Activated CD4-positive, alpha-beta memory T cell treated with anti-CD3 and anti-CD28 coated beads, Interleukin-2, amount 10 ng/mL, durations not matched to agents 7 days and 5 days (primary cell): ENCODE measurements at regions of chr2 and their contacts with region 1.

Region 1: GRCh38 chr2:69914170-69914960 is 544 bp upstream of the MXD1 start:
- DNase-seq: peak; percentile 100
- H3K4me3 Mint-ChIP-seq: peak overlapping the region; percentile 82
- H3K27ac Mint-ChIP-seq: peak overlapping the region; percentile 81
- H3K4me1 Mint-ChIP-seq: peaks cover 43% of the 10 kb centered on the region
- H3K27me3 Mint-ChIP-seq: no peaks in the 10 kb centered on the region

Region 2: GRCh38 chr2:69724540-69725159 is 189.7 kb before region 1 on chr2:
- CTCF ChIA-PET with region 1: interaction called, 37 read pairs
- POLR2A ChIA-PET with region 1: no interaction called
- DNase-seq: peak; percentile 87
- H3K4me3 Mint-ChIP-seq: peak overlapping the region; percentile 41
- H3K27ac Mint-ChIP-seq: no peak overlapping the region
- H3K4me1 Mint-ChIP-seq: peaks cover 6% of the 10 kb centered on the region
- H3K27me3 Mint-ChIP-seq: no peaks in the 10 kb centered on the region

Region 3: GRCh38 chr2:69933839-69934613 is 19.7 kb after region 1 on chr2:
- CTCF ChIA-PET with region 1: interaction called, 4 read pairs
- POLR2A ChIA-PET with region 1: interaction called, 21 read pairs
- DNase-seq: no peak
- H3K4me3 Mint-ChIP-seq: no peak overlapping the region
- H3K27ac Mint-ChIP-seq: peak overlapping the region; percentile 15
- H3K4me1 Mint-ChIP-seq: peaks cover 40% of the 10 kb centered on the region
- H3K27me3 Mint-ChIP-seq: no peaks in the 10 kb centered on the region

Region 4: DNA sequence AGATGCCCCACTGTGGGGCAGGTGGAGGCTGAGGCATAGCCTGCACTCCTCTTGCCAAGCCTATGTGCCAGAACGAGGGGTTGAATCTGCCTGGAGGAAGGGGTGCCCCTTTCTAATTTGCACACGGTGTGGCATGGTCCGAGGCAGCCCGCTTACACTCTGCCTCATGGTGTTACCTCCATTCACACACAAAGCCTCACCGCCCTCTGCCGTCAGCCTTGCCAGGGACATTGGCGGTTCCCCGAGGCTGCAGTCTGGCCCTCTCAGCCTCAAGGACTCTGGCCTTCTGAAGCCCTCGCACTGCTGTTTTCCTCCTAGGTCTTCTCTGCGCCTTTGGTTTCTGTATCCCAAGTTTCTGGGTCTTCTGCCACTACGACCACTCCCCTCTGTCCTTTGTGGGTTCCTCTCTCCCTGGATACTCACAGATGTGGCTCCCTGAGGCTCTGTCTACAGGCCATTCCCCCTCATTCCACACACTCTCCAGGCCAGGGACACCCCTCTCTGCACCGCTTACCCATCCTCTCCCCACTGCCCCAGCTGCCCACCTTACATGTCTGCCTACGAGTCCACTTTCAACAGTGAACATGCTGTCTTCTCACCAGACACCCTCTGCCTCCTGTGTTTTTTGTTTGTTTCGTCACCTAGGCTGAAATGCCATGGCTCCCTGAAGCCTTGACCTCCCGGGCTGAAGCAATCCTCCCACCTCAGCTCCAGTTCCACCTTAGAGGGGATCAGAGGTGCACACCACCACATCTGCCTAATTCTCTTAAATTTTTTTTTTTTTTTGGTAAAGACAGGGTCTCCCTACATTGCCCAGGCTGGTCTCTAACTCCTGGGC is 55.0 kb after region 1 on chr2:
- CTCF ChIA-PET with region 1: no interaction called
- POLR2A ChIA-PET with region 1: no interaction called
- DNase-seq: no peak
- H3K4me3 Mint-ChIP-seq: no peak overlapping the region
- H3K27ac Mint-ChIP-seq: no peak overlapping the region
- H3K4me1 Mint-ChIP-seq: peaks cover 10% of the 10 kb centered on the region
- H3K27me3 Mint-ChIP-seq: peaks cover 4% of the 10 kb centered on the region

Region 5: GRCh38 chr2:70062268-70062667 is 147.9 kb after region 1 on chr2:
- CTCF ChIA-PET with region 1: interaction called, 251 read pairs
- POLR2A ChIA-PET with region 1: interaction called, 228 read pairs
- DNase-seq: no peak
- H3K4me3 Mint-ChIP-seq: no peak overlapping the region
- H3K27ac Mint-ChIP-seq: no peak overlapping the region
- H3K4me1 Mint-ChIP-seq: peaks cover 18% of the 10 kb centered on the region
- H3K27me3 Mint-ChIP-seq: no peaks in the 10 kb centered on the region

Region 6: GRCh38 chr2:70086838-70087701 is 172.7 kb after region 1 on chr2 and contains the start of gene PCBP1:
- CTCF ChIA-PET with region 1: interaction called, 36 read pairs
- POLR2A ChIA-PET with region 1: interaction called, 287 read pairs
- DNase-seq: peak; percentile 95
- H3K4me3 Mint-ChIP-seq: peak within 1 kb of the TSS; percentile 98
- H3K27ac Mint-ChIP-seq: peak within 1 kb of the TSS; percentile 100
- H3K4me1 Mint-ChIP-seq: peaks cover 59% of the 10 kb centered on the region
- H3K27me3 Mint-ChIP-seq: no peaks in the 10 kb centered on the region
- total RNA-seq, gene PCBP1: 475 to 483 TPM

Region 7: DNA sequence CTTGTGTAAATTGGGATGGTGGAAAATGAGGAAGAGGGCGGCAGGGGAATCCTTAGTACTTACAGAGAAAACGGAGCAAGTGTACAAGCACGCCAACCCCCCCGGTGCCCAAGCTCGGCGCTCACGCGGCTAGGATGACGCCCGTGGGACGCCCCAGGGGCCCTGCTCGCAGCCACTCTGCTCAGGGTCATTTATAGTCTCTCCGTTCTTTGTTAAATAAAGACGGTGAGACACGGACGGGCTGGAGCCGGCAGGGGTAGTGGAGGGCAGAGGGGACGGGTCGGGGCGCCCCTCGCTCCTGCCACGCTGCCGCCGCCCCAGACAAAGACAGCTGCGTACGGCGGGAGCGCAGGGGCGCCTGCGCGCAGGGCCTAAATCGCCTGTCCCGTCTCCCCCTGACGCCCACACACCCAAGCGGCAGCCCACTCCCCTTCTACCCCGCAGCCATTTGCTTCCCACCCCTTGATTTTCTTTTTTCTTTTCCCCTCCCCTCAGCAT is 210.7 kb after region 1 on chr2:
- CTCF ChIA-PET with region 1: interaction called, 14 read pairs
- POLR2A ChIA-PET with region 1: interaction called, 46 read pairs
- DNase-seq: peak; percentile 65
- H3K4me3 Mint-ChIP-seq: peak overlapping the region; percentile 84
- H3K27ac Mint-ChIP-seq: peak overlapping the region; percentile 99
- H3K4me1 Mint-ChIP-seq: peaks cover 71% of the 10 kb centered on the region
- H3K27me3 Mint-ChIP-seq: no peaks in the 10 kb centered on the region

Region 8: GRCh38 chr2:70190418-70191243 is 276.3 kb after region 1 on chr2 and contains the start of gene C2orf42:
- CTCF ChIA-PET with region 1: interaction called, 33 read pairs
- POLR2A ChIA-PET with region 1: interaction called, 38 read pairs
- DNase-seq: peak; percentile 96
- H3K4me3 Mint-ChIP-seq: peak within 1 kb of the TSS; percentile 82
- H3K27ac Mint-ChIP-seq: peak within 1 kb of the TSS; percentile 87
- H3K4me1 Mint-ChIP-seq: peaks cover 23% of the 10 kb centered on the region
- H3K27me3 Mint-ChIP-seq: no peaks in the 10 kb centered on the region
- total RNA-seq, gene C2orf42: 28.8 to 32.2 TPM